ENCODE measurements at regions of chrX and their contacts with region 1.

Region 1: DNA sequence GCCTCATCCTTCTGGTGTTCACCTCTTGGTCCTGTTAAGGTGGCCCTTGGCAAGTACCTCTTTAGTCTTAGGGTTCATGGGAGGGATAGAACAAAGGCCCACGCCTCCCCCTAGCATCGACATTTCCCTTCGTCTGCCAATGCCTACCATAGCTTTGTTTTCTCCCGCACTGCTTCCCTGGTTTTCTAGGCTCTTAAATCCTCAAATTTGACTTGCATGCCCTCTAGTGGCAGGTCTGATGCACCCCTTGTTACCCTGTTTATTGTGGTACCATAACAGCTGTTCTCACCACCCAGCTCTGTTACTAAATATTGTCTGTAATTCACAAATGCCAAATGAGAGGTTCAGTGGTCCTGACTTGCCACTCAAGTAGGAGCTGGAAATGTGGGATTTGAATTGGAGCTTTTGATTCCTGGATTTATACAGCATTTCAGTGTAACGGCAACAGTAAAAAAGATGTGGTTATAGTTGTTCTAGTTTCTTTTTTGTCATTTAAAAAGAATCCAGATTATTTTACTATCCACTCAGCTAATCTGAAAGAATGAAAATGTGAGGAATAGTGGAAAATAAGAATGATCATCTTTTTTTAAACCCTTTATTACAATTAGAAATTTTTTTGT is 100.1 kb downstream of the REPS2 start:
- DNase-seq: peak; percentile 62
- H3K4me3 ChIP-seq: no peak overlapping the region
- H3K27ac ChIP-seq: no peak overlapping the region
- H3K4me1 ChIP-seq: no peaks in the 10 kb centered on the region
- H3K27me3 ChIP-seq: no peaks in the 10 kb centered on the region
- CTCF ChIP-seq: peak; percentile 50 to 65
- POLR2A ChIP-seq: no peak

Region 2: DNA sequence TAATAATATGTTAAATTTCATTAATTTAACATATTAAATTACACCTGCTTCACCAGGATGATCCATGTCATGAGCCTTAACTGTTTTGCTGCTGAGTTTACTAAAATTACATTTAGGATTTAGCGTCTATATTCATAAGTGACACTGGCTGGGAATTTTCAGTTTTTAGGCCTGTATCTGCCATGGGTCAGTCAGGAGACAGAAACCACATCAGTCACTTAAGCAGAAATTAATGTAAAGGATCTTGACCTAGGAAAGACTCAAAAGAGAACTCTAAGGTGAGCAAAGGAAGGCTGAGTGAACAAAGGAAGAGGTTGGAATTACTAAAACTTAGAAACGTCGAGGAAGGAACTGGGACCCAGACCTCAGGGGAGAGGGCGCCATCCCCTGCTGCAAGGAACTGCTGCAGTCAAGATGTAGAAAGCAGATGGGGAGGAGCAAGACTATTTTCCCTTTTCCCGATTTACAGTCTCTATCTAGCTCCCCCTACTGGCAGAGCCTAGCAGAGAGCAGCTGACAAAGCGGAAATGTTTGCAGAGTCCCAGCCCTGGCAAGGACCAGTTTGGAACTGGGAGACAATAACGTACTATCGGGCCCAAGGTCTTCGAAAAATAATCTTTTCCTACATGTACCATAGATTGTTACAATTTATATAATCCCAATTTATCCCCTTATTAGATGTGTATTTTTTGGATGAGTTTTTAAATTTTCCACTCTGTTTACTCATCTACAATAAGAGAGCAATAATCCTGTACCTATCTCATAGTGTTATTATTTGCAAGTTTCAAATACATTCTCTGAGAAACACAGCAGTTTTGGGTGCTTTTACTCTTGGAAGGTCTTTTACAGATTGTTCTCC is 153.9 kb before region 1 on chrX:
- CTCF ChIA-PET with region 1: interaction called, 280 read pairs
- POLR2A ChIA-PET with region 1: no interaction called
- dilution Hi-C with region 1: no loop called
- intact Hi-C with region 1: loop called (anchors 2 kb)
- DNase-seq: peak; percentile 70
- H3K4me3 ChIP-seq: no peak overlapping the region
- H3K27ac ChIP-seq: no peak overlapping the region
- H3K4me1 ChIP-seq: no peaks in the 10 kb centered on the region
- H3K27me3 ChIP-seq: no peaks in the 10 kb centered on the region
- CTCF ChIP-seq: peak; percentile 67 to 76
- POLR2A ChIP-seq: no peak

Region 3: DNA sequence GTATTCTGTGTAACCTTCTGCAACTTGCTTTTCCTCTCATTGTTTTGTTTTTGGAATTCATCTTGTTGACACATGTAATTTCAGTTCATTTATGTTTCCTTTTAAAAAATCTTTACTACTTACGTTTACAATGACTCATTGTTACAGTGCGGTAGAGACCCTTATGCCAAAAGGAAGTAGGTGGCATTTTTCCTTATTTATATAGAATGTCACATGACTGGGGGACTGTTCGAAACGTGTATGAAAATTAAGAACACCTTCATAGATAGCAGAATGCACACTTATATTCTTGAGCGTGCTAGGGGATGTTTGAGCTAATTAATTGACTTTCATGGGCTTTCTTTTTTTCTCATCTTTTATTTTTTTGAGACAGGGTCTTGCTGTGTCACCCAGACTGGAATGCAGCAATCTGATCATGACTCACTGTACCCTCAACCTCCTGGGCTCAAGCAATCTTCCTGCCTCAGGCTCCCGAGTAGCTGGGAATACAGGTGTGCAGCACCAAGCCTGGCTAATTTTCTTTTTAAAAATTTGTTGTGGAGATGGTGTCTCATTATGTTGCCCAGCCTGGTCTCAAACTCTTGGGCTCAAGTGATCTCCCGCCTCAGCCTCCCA is 92.9 kb before region 1 on chrX:
- CTCF ChIA-PET with region 1: interaction called, 23 read pairs
- POLR2A ChIA-PET with region 1: no interaction called
- dilution Hi-C with region 1: no loop called
- intact Hi-C with region 1: no loop called
- DNase-seq: peak; percentile 73
- H3K4me3 ChIP-seq: no peak overlapping the region
- H3K27ac ChIP-seq: peak overlapping the region; percentile 82
- H3K4me1 ChIP-seq: peaks cover 26% of the 10 kb centered on the region
- H3K27me3 ChIP-seq: no peaks in the 10 kb centered on the region
- CTCF ChIP-seq: no peak
- POLR2A ChIP-seq: no peak

Region 4: DNA sequence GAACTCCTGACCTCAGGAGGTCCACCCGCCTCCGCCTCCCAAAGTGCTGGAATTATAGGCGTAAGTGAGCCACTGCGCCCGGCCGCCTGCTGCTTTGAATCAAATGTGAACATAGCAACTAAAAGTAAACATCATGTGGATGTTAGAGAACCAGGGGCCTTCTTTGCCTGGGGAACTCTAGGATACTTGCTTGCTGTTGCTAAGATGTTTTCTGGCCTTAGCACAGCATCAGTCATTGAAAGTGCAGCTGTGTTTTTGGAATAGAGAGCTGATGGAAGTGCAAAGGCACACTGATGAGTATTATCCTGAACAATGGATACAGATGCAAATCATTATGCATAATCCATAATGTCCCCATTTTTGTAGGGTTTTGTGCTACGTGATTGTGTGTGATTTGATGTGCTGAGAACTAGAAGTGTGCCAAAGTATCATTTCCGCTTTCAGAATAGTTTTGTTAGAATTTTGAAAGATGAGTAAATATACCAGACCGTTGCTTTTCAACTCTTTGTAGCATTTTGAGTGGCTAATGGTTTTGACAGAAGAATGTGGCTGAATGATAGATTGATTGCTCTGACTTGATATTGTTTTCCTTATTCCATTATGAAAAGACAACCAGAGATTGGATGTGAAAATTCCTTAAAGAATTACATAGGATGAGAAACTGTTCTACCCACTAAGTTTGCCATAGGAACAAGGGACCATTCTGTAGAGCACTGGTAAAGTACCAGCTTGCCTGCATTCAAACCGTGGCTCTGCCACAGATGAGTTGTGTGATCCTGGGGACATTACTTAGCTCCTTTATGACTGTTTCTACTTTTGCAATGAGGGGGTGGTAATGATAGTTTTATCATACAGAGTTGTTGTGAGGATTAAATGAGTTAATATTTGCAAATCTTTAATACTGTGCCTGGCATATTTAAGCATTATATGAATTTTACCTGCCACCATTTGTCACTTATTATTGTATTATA is 25.5 kb before region 1 on chrX:
- CTCF ChIA-PET with region 1: interaction called, 13 read pairs
- POLR2A ChIA-PET with region 1: no interaction called
- dilution Hi-C with region 1: no loop called
- intact Hi-C with region 1: no loop called
- DNase-seq: no peak
- H3K4me3 ChIP-seq: no peak overlapping the region
- H3K27ac ChIP-seq: no peak overlapping the region
- H3K4me1 ChIP-seq: no peaks in the 10 kb centered on the region
- H3K27me3 ChIP-seq: no peaks in the 10 kb centered on the region
- CTCF ChIP-seq: no peak
- POLR2A ChIP-seq: no peak

Region 5: DNA sequence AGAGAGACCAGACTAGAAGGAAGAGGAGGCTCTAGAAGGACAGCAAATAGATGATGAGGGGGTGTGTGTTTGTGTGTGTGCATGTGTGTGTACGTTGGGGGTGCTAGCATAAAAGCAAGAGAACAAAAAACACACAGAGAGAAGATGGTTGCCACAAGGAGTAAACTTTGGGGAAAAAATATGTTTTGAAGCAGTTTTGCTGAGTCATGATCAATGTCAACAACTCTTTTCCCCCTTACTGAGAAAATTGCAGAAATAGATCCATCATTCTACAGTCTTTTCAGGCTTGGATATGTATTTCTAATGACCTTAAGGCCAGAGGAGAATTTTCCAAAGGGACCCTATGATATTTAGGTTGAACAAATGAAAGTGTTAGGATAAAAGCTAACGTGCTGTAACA is 239.4 kb after region 1 on chrX:
- CTCF ChIA-PET with region 1: no interaction called
- POLR2A ChIA-PET with region 1: no interaction called
- dilution Hi-C with region 1: no loop called
- intact Hi-C with region 1: no loop called
- DNase-seq: no peak
- H3K4me3 ChIP-seq: no peak overlapping the region
- H3K27ac ChIP-seq: no peak overlapping the region
- H3K4me1 ChIP-seq: no peaks in the 10 kb centered on the region
- H3K27me3 ChIP-seq: no peaks in the 10 kb centered on the region
- CTCF ChIP-seq: no peak
- POLR2A ChIP-seq: no peak

Region 6: GRCh38 chrX:17669458-17669857 is 622.9 kb after region 1 on chrX:
- CTCF ChIA-PET with region 1: no interaction called
- POLR2A ChIA-PET with region 1: no interaction called
- dilution Hi-C with region 1: no loop called
- intact Hi-C with region 1: no loop called
- DNase-seq: no peak
- H3K4me3 ChIP-seq: no peak overlapping the region
- H3K27ac ChIP-seq: no peak overlapping the region
- H3K4me1 ChIP-seq: no peaks in the 10 kb centered on the region
- H3K27me3 ChIP-seq: no peaks in the 10 kb centered on the region
- CTCF ChIP-seq: no peak
- POLR2A ChIP-seq: no peak

Measured in endothelial cell of umbilical vein (primary cell).